ENCODE measurements at regions of chr6 and their contacts with region 1.

Region 1: DNA sequence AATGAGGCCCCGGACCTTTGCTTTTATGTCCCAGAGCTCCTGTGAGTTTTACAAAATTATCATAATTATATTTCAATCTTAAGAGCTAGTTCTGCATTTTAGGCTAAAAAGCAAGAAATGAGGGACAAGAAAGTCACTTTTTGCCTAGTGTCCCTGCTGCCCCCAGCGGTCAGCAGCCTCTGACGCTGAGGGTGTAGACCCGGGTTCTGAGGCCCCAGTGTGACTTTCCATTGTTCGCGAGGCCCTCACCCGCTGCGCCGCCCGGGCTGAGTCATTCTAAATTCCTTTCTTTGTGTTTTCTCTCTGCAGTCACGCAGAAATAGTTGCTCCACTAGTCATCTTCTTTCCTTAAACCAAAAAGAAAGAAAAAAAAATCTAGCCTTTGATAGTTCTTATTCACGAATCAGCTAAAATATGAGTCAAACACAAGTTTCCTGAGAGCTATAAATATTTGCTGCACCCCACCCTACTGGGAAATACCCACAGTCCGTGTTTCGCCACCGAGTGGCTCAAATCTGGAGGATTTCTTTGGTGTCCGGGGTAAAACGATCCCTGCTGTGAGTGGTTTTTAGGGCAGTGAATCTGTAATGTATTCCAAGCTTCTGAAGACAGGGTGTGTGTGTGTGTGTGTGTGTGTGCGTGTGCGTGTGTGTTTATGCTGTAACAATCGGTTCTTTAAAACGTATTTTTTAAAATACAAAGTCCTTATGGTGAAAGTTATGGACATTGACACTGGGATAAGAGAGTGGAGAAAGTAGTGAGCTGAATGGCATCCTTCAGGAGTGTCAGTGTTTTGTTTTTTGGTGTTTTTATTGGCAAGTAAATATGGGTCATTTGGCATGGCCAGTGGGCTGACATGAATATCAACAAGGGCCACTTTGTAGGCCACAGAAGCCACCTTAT is 59.7 kb upstream of the EEF1A1 start:
- DNase-seq: peak; percentile 83 to 92
- H3K4me3 ChIP-seq: peak overlapping the region; percentile 40 to 49
- H3K27ac ChIP-seq: peak overlapping the region; percentile 85 to 96
- H3K4me1 ChIP-seq: peaks cover 0 to 32% (median 19%) of the 10 kb centered on the region in 4 donors
- H3K27me3 ChIP-seq: no peaks in the 10 kb centered on the region
- CTCF ChIP-seq: peak; percentile 27 to 33

Region 2: GRCh38 chr6:73339347-73339746 is 241.2 kb before region 1 on chr6:
- intact Hi-C with region 1: no loop called
- DNase-seq: no peak
- H3K4me3 ChIP-seq: no peak overlapping the region
- H3K27ac ChIP-seq: no peak overlapping the region
- H3K4me1 ChIP-seq: no peaks in the 10 kb centered on the region
- H3K27me3 ChIP-seq: no peaks in the 10 kb centered on the region
- CTCF ChIP-seq: no peak

Region 3: GRCh38 chr6:73520688-73521350 is 59.7 kb before region 1 on chr6 and contains the start of gene EEF1A1:
- intact Hi-C with region 1: loop called (anchors 2 kb)
- DNase-seq: peak; percentile 99 to 100
- H3K4me3 ChIP-seq: peak within 1 kb of the TSS; percentile 82 to 88
- H3K27ac ChIP-seq: peak within 1 kb of the TSS; percentile 97 to 99
- H3K4me1 ChIP-seq: peaks cover 0 to 62% (median 35%) of the 10 kb centered on the region in 4 donors
- H3K27me3 ChIP-seq: no peaks in the 10 kb centered on the region
- CTCF ChIP-seq: no peak

Region 4: DNA sequence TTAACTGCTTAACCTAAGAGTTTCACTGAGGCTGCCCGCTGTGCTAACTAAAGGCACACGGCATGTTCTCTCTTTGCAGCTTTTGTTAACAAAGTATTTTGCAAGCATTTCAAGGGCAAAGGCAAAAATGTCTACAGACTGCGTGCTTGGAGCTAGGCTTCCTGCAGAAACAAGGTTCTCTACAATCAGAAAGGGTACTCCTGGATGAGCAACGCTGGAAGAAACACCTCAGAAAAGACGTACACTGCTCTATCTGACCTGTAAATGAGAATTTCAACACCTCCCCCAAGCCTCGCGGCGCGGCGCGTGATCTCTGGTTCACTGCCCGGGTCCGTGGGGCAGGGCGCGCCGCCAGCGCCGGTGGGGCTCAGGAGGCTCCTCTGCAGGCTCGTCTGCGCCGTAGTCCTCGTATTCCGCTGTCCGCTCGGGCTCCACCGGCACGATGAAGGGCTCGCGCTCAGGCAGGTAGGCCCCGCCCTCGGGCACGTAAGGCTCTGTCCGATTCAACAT is 1504.4 kb after region 1 on chr6:
- intact Hi-C with region 1: loop called (anchors 5 kb)
- DNase-seq: no peak
- H3K4me3 ChIP-seq: peak overlapping the region; percentile 6 to 16
- H3K27ac ChIP-seq: no peak overlapping the region
- H3K4me1 ChIP-seq: peaks cover 0 to 11% (median 7%) of the 10 kb centered on the region in 4 donors
- H3K27me3 ChIP-seq: no peaks in the 10 kb centered on the region
- CTCF ChIP-seq: no peak